Colonic mucosa (tissue), 4 donors: ENCODE measurements at regions of chr9 and their contacts with region 1.

Region 1: DNA sequence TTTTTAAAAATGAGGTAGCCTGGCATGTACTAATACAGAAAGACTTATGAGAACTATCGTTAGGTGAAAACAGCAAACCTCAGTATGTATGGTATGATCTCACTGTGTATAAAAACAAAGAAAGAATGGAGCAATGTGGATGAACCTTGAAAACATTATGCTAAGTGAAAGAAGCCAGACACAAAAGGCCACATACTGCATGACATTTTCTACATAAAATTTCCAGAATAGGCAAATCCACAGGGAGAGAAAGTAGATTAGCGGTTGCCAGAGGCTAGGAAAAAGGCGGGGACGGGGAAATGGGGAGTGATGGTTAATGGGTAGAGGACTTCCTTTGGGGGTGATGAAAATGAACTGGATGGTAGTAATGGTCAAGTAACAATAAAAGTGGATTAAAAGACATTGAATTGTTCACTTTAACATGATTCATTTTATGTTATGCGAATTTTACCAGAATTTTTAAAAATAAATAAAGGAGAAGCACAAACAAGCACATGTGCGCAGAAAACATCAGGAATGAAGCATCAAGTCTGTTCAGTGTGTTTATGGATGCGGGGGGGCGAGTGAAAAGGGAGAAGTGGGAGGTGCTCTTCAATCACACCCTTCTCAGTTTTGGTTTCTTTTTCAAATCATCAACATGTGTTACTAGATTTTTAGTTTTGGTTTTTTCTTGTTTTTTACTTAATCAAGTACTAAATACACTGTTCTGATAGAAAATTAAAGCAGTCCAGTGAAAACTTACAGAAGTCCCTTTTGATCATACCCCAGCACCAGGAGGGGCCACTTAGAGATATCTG is 16.3 kb downstream of the ROR2 start:
- DNase-seq: no peak
- H3K4me3 ChIP-seq: no peak overlapping the region
- H3K27ac ChIP-seq: no peak overlapping the region
- H3K4me1 ChIP-seq: no peaks in the 10 kb centered on the region
- H3K27me3 ChIP-seq: no peaks in the 10 kb centered on the region
- CTCF ChIP-seq: no peak

Region 2: DNA sequence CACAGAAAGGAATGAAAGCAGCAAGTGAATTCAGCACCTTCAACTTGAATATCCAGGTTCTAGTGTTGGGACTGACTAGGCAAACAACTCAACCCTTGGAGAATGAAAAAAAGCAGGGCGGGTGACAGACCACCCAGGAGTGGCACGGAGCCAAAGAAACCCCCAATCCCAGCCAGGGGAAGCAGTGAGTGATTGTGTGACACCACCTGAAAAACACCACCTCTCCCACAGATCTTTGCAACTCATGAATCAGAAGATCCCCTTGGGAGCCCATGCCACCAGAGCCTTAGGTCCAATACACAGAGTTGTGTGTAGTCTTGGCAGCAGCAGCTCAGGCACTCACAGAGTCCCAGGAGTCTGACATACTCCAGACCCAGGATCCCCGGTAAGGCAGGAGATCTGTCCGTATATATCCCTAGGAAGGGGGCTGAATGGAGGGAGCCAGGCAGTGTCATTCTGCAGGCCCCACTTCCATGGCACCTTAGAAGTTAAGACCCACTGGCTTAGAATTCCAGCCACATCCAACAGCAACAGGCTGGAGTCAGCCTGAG is 38.4 kb after region 1 on chr9:
- intact Hi-C with region 1: loop called (anchors 2 kb)
- DNase-seq: no peak
- H3K4me3 ChIP-seq: no peak overlapping the region
- H3K27ac ChIP-seq: no peak overlapping the region
- H3K4me1 ChIP-seq: no peaks in the 10 kb centered on the region
- H3K27me3 ChIP-seq: no peaks in the 10 kb centered on the region
- CTCF ChIP-seq: no peak